Activated CD8-positive, alpha-beta T cell treated with anti-CD3 and anti-CD28 coated beads for 36 hours (primary cell): ENCODE measurements at regions of chr6 and their contacts with region 1.

Region 1: GRCh38 chr6:31739639-31740396 is at the start of gene MSH5:
- DNase-seq: peak; percentile 99
- ATAC-seq: peak; percentile 83
- H3K4me3 Mint-ChIP-seq: peak within 1 kb of the TSS; percentile 97
- H3K27ac Mint-ChIP-seq: peak within 1 kb of the TSS; percentile 97
- H3K4me1 Mint-ChIP-seq: peaks cover 38% of the 10 kb centered on the region
- H3K27me3 Mint-ChIP-seq: no peaks in the 10 kb centered on the region
- CTCF ChIP-seq: no peak
- total RNA-seq, gene MSH5: 96.9 to 105 TPM

Region 2: GRCh38 chr6:31403283-31403989 is 336.4 kb before region 1 on chr6 and contains the start of gene MICA:
- CTCF ChIA-PET with region 1: no interaction called
- POLR2A ChIA-PET with region 1: no interaction called
- intact Hi-C with region 1: no loop called
- DNase-seq: peak; percentile 77
- ATAC-seq: peak; percentile 68
- H3K4me3 Mint-ChIP-seq: peak within 1 kb of the TSS; percentile 81
- H3K27ac Mint-ChIP-seq: peak within 1 kb of the TSS; percentile 71
- H3K4me1 Mint-ChIP-seq: peaks cover 57% of the 10 kb centered on the region
- H3K27me3 Mint-ChIP-seq: no peaks in the 10 kb centered on the region
- CTCF ChIP-seq: no peak
- total RNA-seq, gene MICA: 5.6 to 6.0 TPM

Region 3: DNA sequence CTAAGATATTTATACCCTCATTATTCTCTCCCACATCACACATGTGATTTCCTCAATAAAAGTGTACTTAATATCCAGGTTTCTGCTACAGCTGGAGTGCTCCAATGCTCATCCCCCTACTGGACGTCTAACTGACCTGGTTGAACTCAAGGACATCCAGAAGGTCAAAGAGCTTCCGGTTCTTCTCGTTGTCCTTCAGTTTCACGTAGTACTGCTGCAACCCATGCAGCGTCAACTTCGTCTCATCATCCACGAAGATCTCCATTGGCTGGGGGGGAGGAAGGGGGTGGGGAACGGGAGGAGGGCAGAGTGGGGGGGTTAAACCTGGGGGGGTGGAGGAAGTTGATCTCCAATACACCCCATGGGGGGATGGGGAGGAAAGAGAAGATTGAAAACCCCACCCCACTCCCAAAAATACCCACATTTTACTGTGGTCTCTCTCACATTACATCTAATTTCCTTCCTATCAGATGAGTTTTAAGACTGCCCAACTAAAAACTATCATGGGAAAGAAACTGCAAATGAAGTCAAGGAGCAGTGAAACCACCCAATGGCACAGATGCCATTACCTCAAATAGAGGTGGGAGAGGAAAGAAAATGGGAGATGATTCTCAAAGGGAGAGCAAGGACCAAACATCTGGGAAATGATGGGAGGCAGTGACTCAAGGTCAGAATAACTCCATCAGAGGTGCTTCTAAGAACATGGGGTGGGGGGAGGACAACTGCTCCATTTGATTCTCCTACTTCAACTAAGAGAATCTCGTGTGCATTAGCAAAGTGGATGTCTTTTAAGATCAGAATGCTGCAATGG is 207.0 kb before region 1 on chr6:
- CTCF ChIA-PET with region 1: no interaction called
- POLR2A ChIA-PET with region 1: no interaction called
- intact Hi-C with region 1: no loop called
- DNase-seq: no peak
- ATAC-seq: no peak
- H3K4me3 Mint-ChIP-seq: no peak overlapping the region
- H3K27ac Mint-ChIP-seq: peak overlapping the region; percentile 69
- H3K4me1 Mint-ChIP-seq: peaks cover 36% of the 10 kb centered on the region
- H3K27me3 Mint-ChIP-seq: no peaks in the 10 kb centered on the region
- CTCF ChIP-seq: no peak

Region 4: DNA sequence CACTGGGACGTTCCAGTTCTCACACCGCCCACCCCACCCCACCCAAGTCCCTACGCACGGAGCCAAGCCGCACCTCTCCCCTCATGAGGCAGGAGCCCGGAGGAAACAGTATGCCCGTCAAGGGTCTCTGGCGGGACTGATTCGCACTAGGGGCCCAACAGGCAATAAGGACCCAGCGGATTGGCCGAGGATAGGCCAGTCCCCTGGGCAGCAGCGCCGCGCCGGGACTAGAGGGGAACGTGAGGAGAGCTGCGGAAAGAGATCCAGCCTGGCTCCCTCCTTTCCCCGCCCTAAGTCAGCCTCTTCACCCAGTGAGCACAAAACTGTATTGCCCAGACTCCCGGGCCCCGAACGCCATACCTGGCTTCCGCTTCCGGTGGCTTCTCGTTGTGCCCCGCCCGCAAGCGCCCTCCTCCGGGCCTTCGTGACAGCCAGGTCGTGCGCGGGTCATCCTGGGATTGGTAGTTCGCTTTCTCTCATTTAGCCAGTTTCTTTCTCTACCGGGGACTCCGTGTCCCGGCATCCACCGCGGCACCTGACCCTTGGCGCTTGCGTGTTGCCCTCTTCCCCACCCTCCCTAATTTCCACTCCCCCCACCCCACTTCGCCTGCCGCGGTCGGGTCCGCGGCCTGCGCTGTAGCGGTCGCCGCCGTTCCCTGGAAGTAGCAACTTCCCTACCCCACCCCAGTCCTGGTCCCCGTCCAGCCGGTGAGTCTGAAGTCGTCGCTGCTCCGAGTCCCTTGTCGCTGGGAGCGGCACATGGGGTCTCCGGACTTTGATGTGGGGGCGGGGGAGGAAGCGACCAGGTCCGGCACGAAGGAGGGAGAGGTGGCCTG is 74.1 kb before region 1 on chr6 and contains the start of gene CSNK2B:
- CTCF ChIA-PET with region 1: interaction called, 3 read pairs
- POLR2A ChIA-PET with region 1: interaction called, 30 read pairs
- intact Hi-C with region 1: no loop called
- DNase-seq: peak; percentile 99
- ATAC-seq: peak; percentile 88
- H3K4me3 Mint-ChIP-seq: peak within 1 kb of the TSS; percentile 98
- H3K27ac Mint-ChIP-seq: peak within 1 kb of the TSS; percentile 97
- H3K4me1 Mint-ChIP-seq: peaks cover 61% of the 10 kb centered on the region
- H3K27me3 Mint-ChIP-seq: no peaks in the 10 kb centered on the region
- CTCF ChIP-seq: no peak
- total RNA-seq, gene CSNK2B: 241 to 247 TPM

Region 5: GRCh38 chr6:31729515-31729978 is 10.3 kb before region 1 on chr6:
- CTCF ChIA-PET with region 1: interaction called, 34 read pairs
- POLR2A ChIA-PET with region 1: interaction called, 10 read pairs
- intact Hi-C with region 1: no loop called
- DNase-seq: peak; percentile 84
- ATAC-seq: peak; percentile 65
- H3K4me3 Mint-ChIP-seq: peak overlapping the region; percentile 76
- H3K27ac Mint-ChIP-seq: peak overlapping the region; percentile 69
- H3K4me1 Mint-ChIP-seq: peaks cover 68% of the 10 kb centered on the region
- H3K27me3 Mint-ChIP-seq: no peaks in the 10 kb centered on the region
- CTCF ChIP-seq: peak; percentile 25

Region 6: DNA sequence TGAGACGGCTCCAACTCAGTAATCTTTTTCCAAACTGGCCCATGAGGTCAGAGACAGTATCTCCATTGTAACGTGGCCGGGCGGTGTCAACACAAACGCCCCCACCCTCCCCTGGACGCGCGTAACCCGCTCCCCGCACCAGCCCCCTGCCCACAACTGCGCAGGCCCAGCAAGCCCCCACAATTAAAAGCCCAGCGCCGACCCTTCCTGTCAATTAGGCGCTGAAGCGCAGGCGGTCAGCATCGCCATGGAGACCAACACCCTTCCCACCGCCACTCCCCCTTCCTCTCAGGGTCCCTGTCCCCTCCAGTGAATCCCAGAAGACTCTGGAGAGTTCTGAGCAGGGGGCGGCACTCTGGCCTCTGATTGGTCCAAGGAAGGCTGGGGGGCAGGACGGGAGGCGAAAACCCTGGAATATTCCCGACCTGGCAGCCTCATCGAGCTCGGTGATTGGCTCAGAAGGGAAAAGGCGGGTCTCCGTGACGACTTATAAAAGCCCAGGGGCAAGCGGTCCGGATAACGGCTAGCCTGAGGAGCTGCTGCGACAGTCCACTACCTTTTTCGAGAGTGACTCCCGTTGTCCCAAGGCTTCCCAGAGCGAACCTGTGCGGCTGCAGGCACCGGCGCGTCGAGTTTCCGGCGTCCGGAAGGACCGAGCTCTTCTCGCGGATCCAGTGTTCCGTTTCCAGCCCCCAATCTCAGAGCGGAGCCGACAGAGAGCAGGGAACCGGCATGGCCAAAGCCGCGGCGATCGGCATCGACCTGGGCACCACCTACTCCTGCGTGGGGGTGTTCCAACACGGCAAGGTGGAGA is 75.4 kb after region 1 on chr6 and contains the starts of genes HSPA1A and HSPA1L:
- CTCF ChIA-PET with region 1: interaction called, 10 read pairs
- POLR2A ChIA-PET with region 1: interaction called, 3 read pairs
- intact Hi-C with region 1: no loop called
- DNase-seq: peak; percentile 67
- ATAC-seq: peak; percentile 28
- H3K4me3 Mint-ChIP-seq: peak within 1 kb of the TSS; percentile 85
- H3K27ac Mint-ChIP-seq: peak within 1 kb of the TSS; percentile 92
- H3K4me1 Mint-ChIP-seq: peaks cover 41% of the 10 kb centered on the region
- H3K27me3 Mint-ChIP-seq: no peaks in the 10 kb centered on the region
- CTCF ChIP-seq: no peak
- total RNA-seq, gene HSPA1A: 36.6 to 37.8 TPM
- total RNA-seq, gene HSPA1L: 1.7 to 2.0 TPM

Region 7: DNA sequence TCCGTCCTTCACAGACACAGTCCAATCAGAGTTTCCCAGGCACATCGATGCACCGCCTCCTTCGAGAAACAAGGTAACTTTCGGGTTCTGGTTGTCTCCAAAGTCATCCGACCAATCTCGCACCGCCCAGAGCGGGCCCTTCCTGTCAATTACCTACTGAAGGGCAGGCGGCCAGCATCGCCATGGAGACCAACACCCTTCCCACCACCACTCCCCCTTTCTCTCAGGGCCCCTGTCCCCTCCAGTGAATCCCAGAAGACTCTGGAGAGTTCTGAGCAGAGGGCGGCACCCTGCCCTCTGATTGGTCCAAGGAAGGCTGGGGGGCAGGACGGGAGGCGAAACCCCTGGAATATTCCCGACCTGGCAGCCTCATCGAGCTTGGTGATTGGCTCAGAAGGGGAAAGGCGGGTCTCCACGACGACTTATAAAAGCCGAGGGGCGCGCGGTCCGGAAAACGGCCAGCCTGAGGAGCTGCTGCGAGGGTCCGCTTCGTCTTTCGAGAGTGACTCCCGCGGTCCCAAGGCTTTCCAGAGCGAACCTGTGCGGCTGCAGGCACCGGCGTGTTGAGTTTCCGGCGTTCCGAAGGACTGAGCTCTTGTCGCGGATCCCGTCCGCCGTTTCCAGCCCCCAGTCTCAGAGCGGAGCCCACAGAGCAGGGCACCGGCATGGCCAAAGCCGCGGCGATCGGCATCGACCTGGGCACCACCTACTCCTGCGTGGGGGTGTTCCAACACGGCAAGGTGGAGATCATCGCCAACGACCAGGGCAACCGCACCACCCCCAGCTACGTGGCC is 87.7 kb after region 1 on chr6 and contains the start of gene HSPA1B:
- CTCF ChIA-PET with region 1: interaction called, 14 read pairs
- POLR2A ChIA-PET with region 1: interaction called, 7 read pairs
- intact Hi-C with region 1: loop called (anchors 5 kb)
- DNase-seq: peak; percentile 98
- ATAC-seq: peak; percentile 82
- H3K4me3 Mint-ChIP-seq: peak within 1 kb of the TSS; percentile 81
- H3K27ac Mint-ChIP-seq: peak within 1 kb of the TSS; percentile 90
- H3K4me1 Mint-ChIP-seq: peaks cover 36% of the 10 kb centered on the region
- H3K27me3 Mint-ChIP-seq: no peaks in the 10 kb centered on the region
- CTCF ChIP-seq: no peak
- total RNA-seq, gene HSPA1B: 50.4 to 50.8 TPM

Region 8: DNA sequence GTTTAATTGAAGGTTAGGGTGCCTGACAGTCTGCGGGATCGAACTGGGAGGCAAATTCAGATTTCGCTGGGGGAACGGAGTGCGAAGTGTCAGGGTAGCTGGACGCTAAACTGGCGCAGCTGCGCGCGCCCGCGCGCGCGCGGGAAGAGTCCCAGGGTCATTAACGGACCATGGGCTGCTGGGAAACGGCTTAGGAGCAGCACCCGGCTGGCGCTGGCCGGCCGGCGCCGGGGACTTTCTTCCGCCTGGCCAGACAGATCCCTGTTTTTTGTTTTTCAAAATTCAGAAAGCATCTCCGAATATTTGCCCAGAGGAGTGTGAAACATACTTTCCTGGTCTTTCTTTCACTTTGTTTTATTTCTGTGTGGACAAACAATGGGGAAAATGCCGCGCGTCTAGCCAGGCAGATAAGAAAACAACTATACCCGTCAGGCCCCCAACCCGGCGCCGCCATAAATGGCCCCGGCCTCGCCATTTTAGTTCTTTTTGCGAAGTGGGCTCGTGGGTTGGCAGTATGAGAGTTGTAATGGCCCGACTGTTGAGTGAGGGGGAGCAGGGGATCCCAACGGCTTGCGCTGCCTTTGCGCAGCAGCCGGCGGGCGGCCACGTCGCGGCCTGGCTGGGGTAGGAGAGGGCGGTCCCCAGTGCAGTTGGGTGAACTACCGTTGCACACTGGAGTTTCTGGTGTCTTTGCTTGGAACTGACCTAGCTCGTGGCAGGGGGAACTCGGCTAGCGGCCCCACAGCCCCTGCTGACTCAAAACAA is 94.8 kb after region 1 on chr6:
- CTCF ChIA-PET with region 1: interaction called, 14 read pairs
- POLR2A ChIA-PET with region 1: interaction called, 7 read pairs
- intact Hi-C with region 1: loop called (anchors 5 kb)
- DNase-seq: peak; percentile 84
- ATAC-seq: peak; percentile 70
- H3K4me3 Mint-ChIP-seq: peak overlapping the region; percentile 92
- H3K27ac Mint-ChIP-seq: peak overlapping the region; percentile 95
- H3K4me1 Mint-ChIP-seq: peaks cover 30% of the 10 kb centered on the region
- H3K27me3 Mint-ChIP-seq: no peaks in the 10 kb centered on the region
- CTCF ChIP-seq: no peak